ENCODE measurements at regions of chr17 and their contacts with region 1.

Region 1: GRCh38 chr17:32783602-32784001 is 93.3 kb downstream of the MYO1D start:
- DNase-seq: no peak
- ATAC-seq: peak; percentile 50
- H3K4me3 Mint-ChIP-seq: no peak overlapping the region
- H3K27ac Mint-ChIP-seq: no peak overlapping the region
- H3K4me1 Mint-ChIP-seq: peaks cover 3% of the 10 kb centered on the region
- H3K27me3 Mint-ChIP-seq: no peaks in the 10 kb centered on the region
- CTCF ChIP-seq: no peak

Region 2: DNA sequence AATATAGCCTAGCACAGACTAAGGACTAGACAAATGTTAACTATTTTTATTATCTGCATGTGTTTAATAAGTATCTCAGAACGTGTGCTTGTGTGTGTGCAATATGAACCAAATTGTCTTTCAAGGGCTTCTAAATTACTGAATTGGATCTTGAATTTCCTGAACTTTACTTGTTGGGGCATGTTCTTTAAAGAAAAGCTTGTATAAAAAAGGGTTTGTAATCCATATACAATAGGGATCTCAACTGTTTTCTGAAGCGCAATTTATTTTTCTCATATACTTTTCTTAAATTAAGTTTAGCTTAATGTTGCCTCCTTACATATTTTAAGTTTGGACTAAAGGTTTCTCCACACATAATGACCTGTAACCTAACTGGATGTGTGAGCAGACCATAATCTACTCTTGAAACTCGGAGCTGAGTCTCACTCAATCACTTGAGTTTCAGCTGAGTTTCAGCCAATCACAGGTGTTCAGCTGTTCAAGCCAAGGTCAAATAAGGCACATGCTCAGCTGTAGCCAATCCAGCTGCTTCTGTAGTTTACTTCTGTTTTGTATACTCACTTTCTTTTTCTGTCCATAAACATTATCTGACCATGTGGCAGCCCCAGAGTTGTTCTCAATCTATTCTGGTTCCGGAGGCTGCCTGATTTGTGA is 224.5 kb before region 1 on chr17:
- CTCF ChIA-PET with region 1: no interaction called
- POLR2A ChIA-PET with region 1: no interaction called
- intact Hi-C with region 1: no loop called
- DNase-seq: no peak
- ATAC-seq: peak; percentile 64
- H3K4me3 Mint-ChIP-seq: peak overlapping the region; percentile 48
- H3K27ac Mint-ChIP-seq: peak overlapping the region; percentile 86
- H3K4me1 Mint-ChIP-seq: peaks cover 38% of the 10 kb centered on the region
- H3K27me3 Mint-ChIP-seq: no peaks in the 10 kb centered on the region
- CTCF ChIP-seq: no peak

Region 3: DNA sequence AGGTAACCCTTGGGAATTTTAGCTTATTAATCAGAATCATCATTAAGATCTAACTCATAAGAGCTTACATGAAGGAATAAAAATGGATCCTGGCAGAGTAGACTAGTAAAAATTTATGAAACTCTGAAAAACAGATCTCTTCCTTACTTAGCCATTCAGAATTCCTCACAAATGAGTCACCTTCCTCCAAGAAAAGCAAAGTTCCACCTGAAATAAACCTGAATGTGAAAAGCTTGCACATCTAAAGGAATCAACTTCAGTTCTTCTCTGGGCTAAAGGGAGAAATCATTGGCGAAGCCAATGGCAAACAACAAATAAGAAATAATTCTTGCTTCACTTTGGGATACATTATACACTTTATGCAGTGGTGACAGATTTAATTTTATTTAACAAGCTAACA is 70.6 kb after region 1 on chr17:
- CTCF ChIA-PET with region 1: interaction called, 6 read pairs
- POLR2A ChIA-PET with region 1: no interaction called
- intact Hi-C with region 1: loop called (anchors 1 kb)
- DNase-seq: no peak
- ATAC-seq: no peak
- H3K4me3 Mint-ChIP-seq: no peak overlapping the region
- H3K27ac Mint-ChIP-seq: no peak overlapping the region
- H3K4me1 Mint-ChIP-seq: no peaks in the 10 kb centered on the region
- H3K27me3 Mint-ChIP-seq: no peaks in the 10 kb centered on the region
- CTCF ChIP-seq: no peak

Region 4: DNA sequence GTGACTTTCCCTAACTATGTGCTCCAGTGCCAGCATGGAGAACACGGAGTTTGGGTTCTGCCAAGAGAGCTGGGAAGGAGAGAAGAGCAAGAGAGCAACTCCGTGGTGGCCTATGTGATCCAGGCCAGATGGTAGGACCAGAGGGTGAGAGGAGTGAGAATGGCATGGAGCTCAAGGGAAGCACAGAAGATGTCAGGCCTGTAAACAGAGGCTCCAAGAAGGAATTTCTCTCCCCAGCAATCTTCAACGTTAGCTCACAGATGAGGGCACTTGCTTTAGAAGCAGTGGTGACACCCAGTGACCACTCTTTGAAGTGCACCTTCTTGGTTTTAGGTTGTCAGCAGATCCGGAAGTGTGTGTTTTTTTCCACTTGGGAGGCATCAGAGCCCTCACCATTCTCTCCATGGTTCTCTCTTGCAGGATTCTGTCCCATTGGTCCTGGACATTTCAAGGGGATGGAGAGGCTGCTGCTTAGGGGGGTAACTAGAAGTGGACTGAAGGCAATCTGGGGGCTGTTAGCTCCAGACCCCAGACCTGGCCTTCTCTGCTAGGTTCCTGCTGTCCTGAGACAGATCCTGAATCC is 126.3 kb after region 1 on chr17:
- CTCF ChIA-PET with region 1: interaction called, 77 read pairs
- POLR2A ChIA-PET with region 1: interaction called, 3 read pairs
- intact Hi-C with region 1: loop called (anchors 1 kb)
- DNase-seq: peak; percentile 22
- ATAC-seq: peak; percentile 91
- H3K4me3 Mint-ChIP-seq: no peak overlapping the region
- H3K27ac Mint-ChIP-seq: no peak overlapping the region
- H3K4me1 Mint-ChIP-seq: no peaks in the 10 kb centered on the region
- H3K27me3 Mint-ChIP-seq: peaks cover 12% of the 10 kb centered on the region
- CTCF ChIP-seq: no peak

Region 5: DNA sequence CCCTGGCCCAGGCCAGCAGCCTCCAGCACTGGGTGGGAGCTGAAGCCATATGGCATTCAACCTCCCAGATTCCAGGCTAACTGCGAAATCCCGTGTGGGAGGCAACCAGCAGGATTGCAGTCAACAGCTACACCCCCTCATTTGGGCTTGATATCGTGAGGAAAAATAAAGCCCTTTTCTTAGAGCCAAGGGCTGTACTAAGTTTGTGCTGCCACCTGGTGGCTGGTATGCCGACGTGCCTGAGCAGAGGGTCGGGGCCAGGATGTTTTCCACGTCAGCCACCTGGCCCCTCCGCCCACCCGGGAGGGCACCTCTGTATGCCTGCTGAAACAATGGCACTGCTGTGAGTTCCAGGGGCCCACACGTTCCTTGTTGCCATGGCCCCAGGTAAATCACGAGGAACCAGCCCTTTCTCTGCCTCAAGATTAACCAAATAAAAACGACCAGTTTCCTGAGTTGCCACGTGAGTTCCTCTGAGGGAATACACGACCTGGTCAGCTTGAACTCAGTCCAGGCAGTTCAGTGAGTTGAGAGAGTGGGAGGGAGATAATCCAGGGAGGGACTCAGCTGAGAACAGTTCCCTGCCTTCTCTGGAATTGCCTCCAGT is 153.4 kb after region 1 on chr17:
- CTCF ChIA-PET with region 1: interaction called, 35 read pairs
- POLR2A ChIA-PET with region 1: no interaction called
- intact Hi-C with region 1: loop called (anchors 1 kb)
- DNase-seq: peak; percentile 35
- ATAC-seq: peak; percentile 34
- H3K4me3 Mint-ChIP-seq: peak overlapping the region; percentile 28
- H3K27ac Mint-ChIP-seq: no peak overlapping the region
- H3K4me1 Mint-ChIP-seq: peaks cover 3% of the 10 kb centered on the region
- H3K27me3 Mint-ChIP-seq: peaks cover 26% of the 10 kb centered on the region
- CTCF ChIP-seq: peak; percentile 36

Region 6: GRCh38 chr17:32997753-32998632 is 214.4 kb after region 1 on chr17:
- CTCF ChIA-PET with region 1: interaction called, 19 read pairs
- POLR2A ChIA-PET with region 1: no interaction called
- intact Hi-C with region 1: loop called (anchors 1 kb)
- DNase-seq: peak; percentile 59
- ATAC-seq: peak; percentile 54
- H3K4me3 Mint-ChIP-seq: no peak overlapping the region
- H3K27ac Mint-ChIP-seq: no peak overlapping the region
- H3K4me1 Mint-ChIP-seq: peaks cover 5% of the 10 kb centered on the region
- H3K27me3 Mint-ChIP-seq: peaks cover 12% of the 10 kb centered on the region
- CTCF ChIP-seq: peak; percentile 96

Region 7: DNA sequence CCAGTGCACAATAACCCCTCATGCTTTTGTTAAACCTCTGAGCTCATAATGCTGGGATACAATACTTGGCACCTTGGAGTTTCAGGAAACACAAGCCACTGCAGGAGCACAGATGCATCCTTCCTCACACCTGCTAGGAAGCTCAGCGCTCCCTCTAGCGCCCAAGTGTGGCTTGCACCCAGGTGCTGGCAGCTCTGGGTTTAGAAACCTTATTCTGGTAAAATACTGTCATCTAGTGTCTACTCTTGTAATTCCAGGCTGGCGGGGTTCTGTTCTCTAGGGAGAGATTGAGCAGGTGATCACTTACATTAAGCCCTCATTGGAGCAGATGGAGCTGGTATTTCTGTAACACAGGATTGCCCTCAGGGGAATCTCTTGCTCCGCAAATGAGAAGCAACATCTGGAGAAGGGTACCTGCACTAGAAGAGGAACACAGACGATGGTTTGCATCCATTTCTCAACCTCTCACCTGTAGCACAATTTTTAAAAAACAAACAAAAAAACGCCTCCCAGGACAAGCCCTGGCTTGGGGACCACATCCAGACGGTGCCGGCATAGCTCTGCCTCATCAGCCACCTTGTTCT is 1578.0 kb after region 1 on chr17:
- CTCF ChIA-PET with region 1: no interaction called
- POLR2A ChIA-PET with region 1: no interaction called
- intact Hi-C with region 1: no loop called
- DNase-seq: peak; percentile 59
- ATAC-seq: peak; percentile 96
- H3K4me3 Mint-ChIP-seq: no peak overlapping the region
- H3K27ac Mint-ChIP-seq: no peak overlapping the region
- H3K4me1 Mint-ChIP-seq: peaks cover 5% of the 10 kb centered on the region
- H3K27me3 Mint-ChIP-seq: peaks cover 13% of the 10 kb centered on the region
- CTCF ChIP-seq: peak; percentile 93

Measured in activated B cell treated with CpG ODN at 0.5 μM for 24 hours (primary cell).